B cell (primary cell): ENCODE measurements at regions of chr11 and their contacts with region 1.

Region 1: GRCh38 chr11:6389921-6390724 is at the start of gene SMPD1:
- DNase-seq: peak; percentile 96
- ATAC-seq: peak; percentile 94
- H3K4me3 ChIP-seq: peak within 1 kb of the TSS; percentile 70 to 93 (median 85)
- H3K4me3 Mint-ChIP-seq: peak within 1 kb of the TSS; percentile 97
- H3K27ac ChIP-seq: peak within 1 kb of the TSS; percentile 98
- H3K27ac Mint-ChIP-seq: peak within 1 kb of the TSS; percentile 98
- H3K4me1 ChIP-seq: peaks cover 18 to 32% of the 10 kb centered on the region in 2 donors
- H3K4me1 Mint-ChIP-seq: peaks cover 32% of the 10 kb centered on the region
- H3K27me3 ChIP-seq: no peaks in the 10 kb centered on the region
- H3K27me3 Mint-ChIP-seq: no peaks in the 10 kb centered on the region
- CTCF ChIP-seq: no peak
- total RNA-seq, gene SMPD1: 18.3 TPM in 2 replicates

Region 2: GRCh38 chr11:5983443-5983842 is 406.7 kb before region 1 on chr11:
- CTCF ChIA-PET with region 1: no interaction called
- POLR2A ChIA-PET with region 1: no interaction called
- intact Hi-C with region 1: no loop called
- DNase-seq: no peak
- ATAC-seq: no peak
- H3K4me3 ChIP-seq: no peak overlapping the region
- H3K4me3 Mint-ChIP-seq: no peak overlapping the region
- H3K27ac ChIP-seq: no peak overlapping the region
- H3K27ac Mint-ChIP-seq: no peak overlapping the region
- H3K4me1 ChIP-seq: no peaks in the 10 kb centered on the region
- H3K4me1 Mint-ChIP-seq: no peaks in the 10 kb centered on the region
- H3K27me3 ChIP-seq: no peaks in the 10 kb centered on the region
- H3K27me3 Mint-ChIP-seq: peaks cover 17% of the 10 kb centered on the region
- CTCF ChIP-seq: no peak

Region 3: DNA sequence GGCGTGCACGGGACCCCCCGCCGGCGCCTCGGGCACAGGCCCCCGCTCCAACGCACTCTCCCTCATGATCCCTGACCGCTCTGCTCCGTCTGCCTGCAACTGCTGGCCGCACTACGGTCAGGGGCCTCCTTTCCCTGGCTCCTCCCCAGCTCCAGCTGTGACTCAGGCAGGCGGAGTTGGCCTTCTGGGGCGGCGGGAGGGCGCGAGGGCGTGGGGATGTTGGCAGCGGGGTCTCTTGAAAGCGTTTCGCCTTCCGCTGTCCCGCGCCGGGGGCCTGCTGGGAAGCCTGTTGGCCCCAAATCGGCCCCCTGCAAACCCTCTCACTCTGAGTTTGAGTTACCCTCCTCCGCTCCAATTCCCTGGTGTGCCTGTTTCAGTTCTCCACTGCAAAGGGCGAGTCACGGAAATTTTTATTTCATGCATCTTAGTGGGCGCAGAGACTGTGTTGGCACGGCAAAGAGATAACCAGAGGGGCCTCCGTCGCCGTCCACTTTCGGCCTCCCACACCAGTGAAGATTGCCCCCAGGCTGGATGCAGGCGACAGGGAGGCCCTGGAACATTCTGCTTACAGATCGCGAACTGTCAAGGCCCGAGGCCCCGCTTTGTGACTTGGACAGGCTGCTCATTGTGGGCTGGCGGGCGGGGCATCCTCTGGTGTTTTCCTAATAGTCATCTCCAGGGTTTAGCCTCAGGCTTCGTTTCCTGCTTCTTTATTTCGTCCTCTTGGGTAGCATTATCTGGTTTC is 69.5 kb before region 1 on chr11 and contains the start of gene CAVIN3:
- CTCF ChIA-PET with region 1: no interaction called
- POLR2A ChIA-PET with region 1: no interaction called
- intact Hi-C with region 1: no loop called
- DNase-seq: no peak
- ATAC-seq: no peak
- H3K4me3 ChIP-seq: no peak within 1 kb of the TSS
- H3K4me3 Mint-ChIP-seq: no peak within 1 kb of the TSS
- H3K27ac ChIP-seq: no peak within 1 kb of the TSS
- H3K27ac Mint-ChIP-seq: no peak within 1 kb of the TSS
- H3K4me1 ChIP-seq: peaks cover 0 to 5% of the 10 kb centered on the region in 2 donors
- H3K4me1 Mint-ChIP-seq: peaks cover 2% of the 10 kb centered on the region
- H3K27me3 ChIP-seq: peaks cover 0 to 34% (median 16%) of the 10 kb centered on the region in 4 experiments
- H3K27me3 Mint-ChIP-seq: peaks cover 66% of the 10 kb centered on the region
- CTCF ChIP-seq: no peak
- total RNA-seq, gene CAVIN3: not detected in 2 replicates

Region 4: DNA sequence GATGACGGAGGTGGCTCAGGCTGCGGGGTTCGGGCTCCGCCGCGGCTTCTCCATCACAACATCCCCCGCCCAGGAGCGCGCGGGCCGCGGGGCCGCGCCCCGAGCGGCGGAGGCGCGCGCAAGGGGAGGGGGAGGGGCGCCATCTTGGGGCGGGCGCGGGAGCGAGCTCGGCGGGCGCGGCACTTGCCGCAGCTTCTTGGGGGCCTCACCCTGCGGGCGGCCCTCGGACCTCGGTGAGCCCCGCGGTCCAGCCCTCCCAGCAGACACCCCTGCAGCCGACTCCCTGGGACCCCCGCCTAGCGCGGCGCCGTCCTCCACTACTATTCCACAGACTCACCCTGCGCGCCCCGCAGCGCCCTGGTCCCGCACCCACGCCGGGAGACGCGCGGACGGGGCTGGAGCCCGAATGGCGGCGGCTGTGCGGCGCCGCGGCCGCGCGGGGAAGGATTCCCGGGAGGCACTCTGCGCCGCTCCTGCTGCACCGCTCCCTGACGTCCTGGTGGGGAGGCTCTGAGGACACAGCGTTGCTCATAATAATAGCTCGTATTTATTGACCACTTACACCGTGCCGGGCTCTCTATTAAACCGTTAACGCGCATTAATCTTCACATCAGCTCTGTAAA is 29.0 kb after region 1 on chr11 and contains the start of gene APBB1:
- CTCF ChIA-PET with region 1: interaction called, 5 read pairs
- POLR2A ChIA-PET with region 1: interaction called, 23 read pairs
- intact Hi-C with region 1: loop called (anchors 1 kb)
- DNase-seq: peak; percentile 87
- ATAC-seq: peak; percentile 83
- H3K4me3 ChIP-seq: peak within 1 kb of the TSS; percentile 27 to 85 (median 71)
- H3K4me3 Mint-ChIP-seq: peak within 1 kb of the TSS; percentile 85
- H3K27ac ChIP-seq: peak within 1 kb of the TSS; percentile 5 to 66
- H3K27ac Mint-ChIP-seq: peak within 1 kb of the TSS; percentile 76
- H3K4me1 ChIP-seq: peaks cover 29 to 32% of the 10 kb centered on the region in 2 donors
- H3K4me1 Mint-ChIP-seq: peaks cover 7% of the 10 kb centered on the region
- H3K27me3 ChIP-seq: peaks cover 0 to 8% (median 7%) of the 10 kb centered on the region in 4 experiments
- H3K27me3 Mint-ChIP-seq: peaks cover 28% of the 10 kb centered on the region
- CTCF ChIP-seq: peak; percentile 17
- total RNA-seq, gene APBB1: 31.4 and 32.5 TPM in 2 replicates

Region 5: GRCh38 chr11:6473481-6474422 is 83.6 kb after region 1 on chr11 and contains the start of gene TRIM3:
- CTCF ChIA-PET with region 1: interaction called, 4 read pairs
- POLR2A ChIA-PET with region 1: interaction called, 4 read pairs
- intact Hi-C with region 1: loop called (anchors 1 kb)
- DNase-seq: peak; percentile 81
- ATAC-seq: peak; percentile 95
- H3K4me3 ChIP-seq: peak within 1 kb of the TSS; percentile 1 to 82 (median 72)
- H3K4me3 Mint-ChIP-seq: peak within 1 kb of the TSS; percentile 91
- H3K27ac ChIP-seq: peak within 1 kb of the TSS; percentile 72 to 76
- H3K27ac Mint-ChIP-seq: peak within 1 kb of the TSS; percentile 87
- H3K4me1 ChIP-seq: peaks cover 8 to 17% of the 10 kb centered on the region in 2 donors
- H3K4me1 Mint-ChIP-seq: peaks cover 19% of the 10 kb centered on the region
- H3K27me3 ChIP-seq: peaks cover 0 to 5% (median 0%) of the 10 kb centered on the region in 4 experiments
- H3K27me3 Mint-ChIP-seq: no peaks in the 10 kb centered on the region
- CTCF ChIP-seq: no peak
- total RNA-seq, gene TRIM3: 16.0 and 20.1 TPM in 2 replicates

Region 6: DNA sequence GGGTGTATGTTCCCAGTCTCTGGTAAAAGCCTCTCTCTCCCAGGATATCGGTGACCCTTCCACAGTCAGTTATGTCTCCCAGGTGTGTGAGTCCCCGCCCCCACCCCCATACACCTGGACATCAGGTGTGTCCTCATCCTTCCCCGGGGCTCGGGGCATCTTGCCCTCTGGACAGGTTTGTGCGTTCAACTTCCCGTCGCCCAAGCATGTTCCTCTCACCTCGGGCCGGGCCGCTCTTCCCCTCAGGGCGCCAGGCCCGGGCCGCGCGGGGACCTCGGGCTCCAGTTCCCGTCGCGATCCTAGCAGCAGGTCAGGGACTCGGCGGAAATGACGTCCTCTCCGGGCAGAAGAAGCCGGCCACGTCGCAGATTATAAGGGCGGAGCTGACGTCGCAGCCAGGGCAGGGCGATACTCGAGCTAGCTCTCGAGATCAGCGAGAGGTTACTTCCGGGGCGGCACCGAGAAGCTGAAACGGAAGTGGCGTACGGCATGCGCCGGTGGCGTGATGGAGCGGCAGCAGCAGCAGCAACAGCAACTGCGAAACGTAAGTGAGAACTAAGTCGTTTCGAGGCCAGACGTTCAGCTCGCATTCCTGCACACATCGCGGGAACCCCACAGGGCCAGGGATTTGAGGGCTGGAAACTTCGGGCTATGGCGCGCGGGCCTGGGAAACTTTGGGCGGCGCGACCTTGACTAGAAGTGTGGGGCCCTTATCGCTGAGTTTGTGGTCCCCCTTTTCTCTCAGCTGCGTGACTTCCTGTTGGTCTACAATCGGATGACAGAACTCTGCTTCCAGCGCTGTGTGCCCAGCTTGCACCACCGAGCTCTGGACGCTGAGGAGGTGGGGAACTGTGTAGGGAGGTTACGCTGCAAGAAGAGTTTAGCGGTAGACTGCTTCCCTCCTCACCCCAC is 91.1 kb after region 1 on chr11 and contains the starts of genes ARFIP2 and TIMM10B:
- CTCF ChIA-PET with region 1: interaction called, 4 read pairs
- POLR2A ChIA-PET with region 1: interaction called, 15 read pairs
- intact Hi-C with region 1: loop called (anchors 1 kb)
- DNase-seq: peak; percentile 98
- ATAC-seq: peak; percentile 96
- H3K4me3 ChIP-seq: peak within 1 kb of the TSS; percentile 26 to 92 (median 83)
- H3K4me3 Mint-ChIP-seq: peak within 1 kb of the TSS; percentile 97
- H3K27ac ChIP-seq: peak within 1 kb of the TSS; percentile 90 to 96
- H3K27ac Mint-ChIP-seq: peak within 1 kb of the TSS; percentile 97
- H3K4me1 ChIP-seq: peaks cover 20 to 27% of the 10 kb centered on the region in 2 donors
- H3K4me1 Mint-ChIP-seq: peaks cover 39% of the 10 kb centered on the region
- H3K27me3 ChIP-seq: no peaks in the 10 kb centered on the region
- H3K27me3 Mint-ChIP-seq: no peaks in the 10 kb centered on the region
- CTCF ChIP-seq: no peak
- total RNA-seq, gene ARFIP2: 46.8 and 47.5 TPM in 2 replicates
- total RNA-seq, gene TIMM10B: 62.1 and 63.7 TPM in 2 replicates